ENCODE measurements at regions of chr9 and their contacts with region 1.

Region 1: DNA sequence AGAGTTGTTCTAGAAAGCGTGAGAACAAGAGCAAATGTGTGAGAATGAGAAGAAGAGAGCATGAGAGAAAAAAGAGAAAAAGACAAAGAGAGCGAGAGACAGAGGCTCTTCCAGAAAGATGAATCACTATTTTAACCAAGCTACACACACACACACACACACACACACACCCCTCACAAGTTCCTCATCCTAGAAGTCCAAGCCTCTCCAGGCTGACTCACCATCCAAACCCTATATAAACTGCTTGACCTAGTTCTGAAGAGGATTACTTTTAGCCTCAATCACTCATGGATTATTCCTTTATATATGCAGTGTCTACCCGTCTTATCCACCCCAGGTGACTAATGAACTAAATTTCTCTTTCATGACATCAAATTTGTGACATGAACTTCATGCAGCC is 37.6 kb downstream of the C9orf57 start:
- DNase-seq: no peak
- ATAC-seq: peak in 3 of 4 donors; percentile 42 to 72 (median 70)
- H3K4me3 ChIP-seq: no peak overlapping the region
- H3K27ac ChIP-seq: no peak overlapping the region
- H3K4me1 ChIP-seq: no peaks in the 10 kb centered on the region
- H3K27me3 ChIP-seq: no peaks in the 10 kb centered on the region
- CTCF ChIP-seq: no peak

Region 2: DNA sequence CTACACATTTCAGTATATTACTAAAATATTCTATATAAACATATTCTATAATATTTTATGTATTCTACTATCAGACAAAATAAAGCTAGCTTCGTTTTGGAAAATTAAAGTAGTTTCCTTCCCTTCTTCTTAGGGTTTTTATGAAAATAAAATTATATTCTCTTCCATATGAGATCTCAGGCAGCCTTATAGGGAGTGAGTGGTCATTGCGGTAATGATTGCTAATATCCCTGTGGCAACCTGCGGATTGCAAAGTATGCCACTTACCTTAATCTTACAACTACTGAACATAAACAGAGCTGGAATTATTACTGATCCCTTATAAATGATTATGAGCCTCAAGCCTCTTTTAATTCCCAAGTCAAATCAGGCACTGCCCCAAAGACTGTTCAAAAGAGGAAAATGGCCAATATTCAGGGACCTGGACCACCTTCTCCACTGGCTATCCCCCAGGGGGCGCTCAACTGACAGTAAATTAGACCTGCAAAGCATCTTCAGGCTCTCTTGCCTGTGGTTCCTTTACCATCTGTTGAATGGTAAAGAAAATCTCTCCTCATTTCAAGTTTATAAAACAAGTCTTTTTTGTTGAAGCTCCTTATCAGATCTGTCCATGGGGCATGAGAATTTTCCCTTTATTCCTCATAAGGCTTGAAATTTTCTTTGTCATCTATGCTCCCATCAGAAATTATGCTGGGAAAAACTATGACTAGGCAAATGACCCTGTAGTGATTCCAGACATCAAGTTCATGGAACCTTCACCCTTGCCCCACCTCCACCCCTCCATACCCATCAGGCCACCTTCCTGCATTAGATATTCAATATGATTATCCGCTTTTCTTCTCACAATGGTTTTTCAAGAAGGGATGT is 418.4 kb before region 1 on chr9:
- intact Hi-C with region 1: loop called in 1 of 2 experiments (anchors 10 kb)
- DNase-seq: peak; percentile 63 to 76
- ATAC-seq: peak in 2 of 4 donors; percentile 51 to 58
- H3K4me3 ChIP-seq: no peak overlapping the region
- H3K27ac ChIP-seq: no peak overlapping the region
- H3K4me1 ChIP-seq: no peaks in the 10 kb centered on the region
- H3K27me3 ChIP-seq: no peaks in the 10 kb centered on the region
- CTCF ChIP-seq: peak; percentile 66

Region 3: DNA sequence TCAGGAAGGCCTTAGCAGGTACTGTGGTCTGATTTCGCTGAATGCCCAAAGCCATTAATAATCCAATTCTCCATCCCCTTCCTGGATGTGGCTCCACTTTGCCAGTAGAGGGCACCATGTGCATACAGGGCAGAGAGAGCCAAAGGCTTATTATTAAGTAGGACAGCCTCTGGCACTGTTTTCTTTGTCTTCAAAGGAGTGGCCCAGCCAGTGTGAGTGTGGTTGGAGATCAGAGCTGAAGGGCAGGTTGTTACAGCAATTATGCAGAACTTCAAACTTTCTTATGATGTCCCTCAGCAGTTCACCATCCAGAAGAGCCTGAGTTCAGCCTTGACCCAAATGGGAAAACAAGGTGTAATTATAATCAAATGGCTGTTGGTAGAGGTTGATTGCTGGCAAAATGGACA is 215.9 kb before region 1 on chr9:
- intact Hi-C with region 1: loop called (anchors 2 kb)
- DNase-seq: peak; percentile 44 to 68
- ATAC-seq: peak; percentile 92 to 99 (median 98)
- H3K4me3 ChIP-seq: no peak overlapping the region
- H3K27ac ChIP-seq: peak overlapping the region; percentile 11
- H3K4me1 ChIP-seq: peaks cover 7% of the 10 kb centered on the region
- H3K27me3 ChIP-seq: no peaks in the 10 kb centered on the region
- CTCF ChIP-seq: peak; percentile 94

Region 4: GRCh38 chr9:71975833-71976232 is 47.0 kb before region 1 on chr9:
- intact Hi-C with region 1: no loop called
- DNase-seq: no peak
- ATAC-seq: no peak
- H3K4me3 ChIP-seq: no peak overlapping the region
- H3K27ac ChIP-seq: no peak overlapping the region
- H3K4me1 ChIP-seq: peaks cover 8% of the 10 kb centered on the region
- H3K27me3 ChIP-seq: no peaks in the 10 kb centered on the region
- CTCF ChIP-seq: peak; percentile 22

Measured in psoas muscle (tissue), 8 donors.